HepG2 (cell line): ENCODE measurements at regions of chr14 and their contacts with region 1.

Region 1: DNA sequence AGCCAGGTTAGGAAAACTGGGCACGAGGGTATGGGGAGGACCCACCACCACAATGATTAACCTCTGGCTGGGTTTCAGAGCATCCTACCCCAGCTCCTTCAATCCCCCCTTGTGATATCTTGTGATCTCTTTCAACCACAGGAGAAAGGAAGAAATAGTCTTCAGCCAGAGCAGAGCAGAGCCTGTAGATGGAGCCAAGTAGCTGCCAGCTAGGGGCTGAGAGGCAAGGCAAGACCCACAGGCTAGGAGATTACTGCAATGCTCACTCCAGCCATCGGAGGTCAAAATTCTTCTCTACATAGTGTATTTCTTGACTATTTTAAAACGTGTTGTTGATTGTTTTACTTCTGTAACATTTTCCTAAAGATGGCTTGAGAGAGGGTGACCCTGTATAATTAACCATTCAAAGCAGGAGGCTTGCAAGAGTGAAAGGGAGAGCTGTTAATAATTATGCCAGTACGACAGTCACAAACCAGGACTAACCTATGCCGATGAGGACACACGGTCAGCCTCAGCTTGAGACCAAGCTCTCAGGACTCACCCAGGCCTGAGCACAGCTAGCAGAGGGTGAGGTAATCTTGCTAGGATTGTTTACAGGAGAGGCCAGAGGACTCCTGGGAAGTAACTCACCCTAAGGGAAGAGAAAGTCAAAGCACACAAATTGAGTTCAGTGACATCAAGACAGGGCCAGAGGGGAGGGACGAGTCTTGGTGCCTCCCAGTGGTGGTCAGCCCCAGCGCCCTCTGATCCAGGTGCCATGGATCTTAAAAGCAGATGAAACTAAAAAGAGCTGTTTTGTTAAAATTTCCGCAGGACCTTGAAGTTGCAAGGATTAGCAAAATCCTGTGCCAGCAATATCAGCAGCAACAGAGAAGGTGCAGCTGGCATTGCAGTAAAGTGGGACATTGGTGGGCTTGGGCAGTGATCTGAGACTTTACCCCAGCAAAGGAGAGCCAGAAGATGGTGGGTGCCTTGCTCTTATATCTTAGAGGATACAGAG is 29.8 kb upstream of the CDKN3 start:
- DNase-seq: peak; percentile 84
- ATAC-seq: peak; percentile 97
- H3K4me3 ChIP-seq: peak overlapping the region; percentile 41 to 62 (median 53); a peak in 5 of 6 replicates
- H3K27ac ChIP-seq: peak overlapping the region; percentile 73
- H3K4me1 ChIP-seq: peaks cover 50% of the 10 kb centered on the region
- H3K27me3 ChIP-seq: no peaks in the 10 kb centered on the region
- CTCF ChIP-seq: peak; percentile 79
- EP300 ChIP-seq: no peak
- POLR2A ChIP-seq: peak; percentile 78 to 94
- RAD21 ChIP-seq: peak; percentile 50

Region 2: DNA sequence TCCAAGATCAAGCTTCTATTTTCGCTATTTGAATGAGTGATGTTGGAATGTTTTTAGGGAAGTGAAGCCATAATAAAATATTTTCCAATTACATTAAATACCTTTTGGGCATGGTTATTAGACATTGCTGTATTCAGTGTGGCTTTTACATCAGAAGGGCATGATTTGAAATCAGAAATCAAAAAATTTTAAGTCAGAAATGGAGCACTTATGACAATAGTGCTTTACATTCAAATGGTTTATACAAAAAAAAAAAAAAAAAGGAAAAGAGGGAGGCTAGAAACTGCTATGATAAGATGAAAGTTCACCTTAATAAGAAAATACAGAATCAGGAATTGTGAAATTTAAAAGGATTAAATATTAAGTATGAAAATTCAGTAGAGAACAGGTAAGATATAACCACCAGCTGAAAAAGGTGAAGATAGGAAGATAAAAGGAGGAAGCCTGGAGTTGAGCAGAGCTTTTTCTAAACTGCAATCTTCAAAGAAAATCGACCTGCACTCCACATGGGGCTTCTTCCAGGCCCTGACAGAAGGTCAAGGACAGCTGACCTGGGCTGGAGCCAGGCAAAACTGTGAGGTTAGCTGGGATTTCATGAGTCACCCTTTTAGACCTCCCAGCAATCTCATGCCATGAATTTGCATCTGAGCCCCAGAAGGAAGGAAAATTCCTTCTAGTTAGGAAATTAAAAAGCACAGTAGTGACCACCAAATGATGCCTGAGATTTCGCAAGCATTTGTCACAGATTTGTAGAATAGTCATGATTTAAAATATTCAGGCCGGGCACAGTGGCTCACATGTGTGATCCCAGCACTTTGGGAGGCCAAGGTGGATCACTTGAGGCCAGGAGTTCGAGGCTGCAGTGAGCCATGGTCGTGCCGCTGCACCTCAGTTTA is 387.0 kb before region 1 on chr14:
- CTCF ChIA-PET with region 1: no interaction called
- POLR2A ChIA-PET with region 1: no interaction called
- in situ Hi-C with region 1: no loop called
- intact Hi-C with region 1: no loop called
- DNase-seq: peak; percentile 97
- ATAC-seq: peak; percentile 86
- H3K4me3 ChIP-seq: peak overlapping the region in 2 of 3 experiments; percentile 1 to 18; a peak in 2 of 6 replicates
- H3K27ac ChIP-seq: peak overlapping the region; percentile 99
- H3K4me1 ChIP-seq: peaks cover 75% of the 10 kb centered on the region
- H3K27me3 ChIP-seq: no peaks in the 10 kb centered on the region
- CTCF ChIP-seq: no peak
- EP300 ChIP-seq: peak; percentile 83 to 96; a peak in 3 of 4 replicates
- POLR2A ChIP-seq: no peak
- RAD21 ChIP-seq: no peak

Region 3: DNA sequence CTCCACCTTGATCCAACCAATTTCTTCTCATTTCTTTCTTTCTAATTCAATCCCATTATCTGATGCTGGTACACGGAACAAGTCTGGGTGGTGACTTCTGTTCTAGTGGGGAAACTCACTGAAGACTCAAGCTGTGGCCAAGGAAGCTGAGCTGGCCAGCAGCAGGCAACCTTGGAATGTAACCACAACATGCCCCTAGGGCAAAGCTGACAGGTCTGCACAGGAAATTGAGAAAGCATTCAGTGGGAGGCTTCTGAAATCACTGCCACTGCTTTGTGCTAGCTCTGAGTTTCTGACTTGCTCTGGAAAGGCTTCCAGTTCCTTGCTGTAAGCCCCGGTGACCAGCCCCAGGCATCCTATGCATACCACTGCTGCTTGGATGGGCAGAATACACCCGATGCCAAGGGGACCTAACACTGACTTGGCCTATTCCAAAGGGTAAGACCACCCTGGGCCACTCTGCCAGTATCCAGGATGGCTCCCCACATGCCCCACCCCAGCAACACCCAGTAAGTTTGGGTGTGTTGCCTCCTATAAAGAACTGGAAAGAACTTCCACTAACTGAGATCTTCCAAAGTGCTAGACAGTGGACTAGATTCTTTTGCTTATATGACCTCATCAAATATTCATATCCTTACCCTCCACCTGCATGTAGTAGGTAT is 54.8 kb before region 1 on chr14:
- CTCF ChIA-PET with region 1: no interaction called
- POLR2A ChIA-PET with region 1: no interaction called
- in situ Hi-C with region 1: no loop called
- intact Hi-C with region 1: no loop called
- DNase-seq: no peak
- ATAC-seq: no peak
- H3K4me3 ChIP-seq: no peak overlapping the region
- H3K27ac ChIP-seq: no peak overlapping the region
- H3K4me1 ChIP-seq: peaks cover 3% of the 10 kb centered on the region
- H3K27me3 ChIP-seq: peaks cover 0 to 2% of the 10 kb centered on the region in 2 experiments; a peak in 3 of 5 replicates
- CTCF ChIP-seq: no peak
- EP300 ChIP-seq: no peak
- POLR2A ChIP-seq: no peak
- RAD21 ChIP-seq: no peak

Region 4: DNA sequence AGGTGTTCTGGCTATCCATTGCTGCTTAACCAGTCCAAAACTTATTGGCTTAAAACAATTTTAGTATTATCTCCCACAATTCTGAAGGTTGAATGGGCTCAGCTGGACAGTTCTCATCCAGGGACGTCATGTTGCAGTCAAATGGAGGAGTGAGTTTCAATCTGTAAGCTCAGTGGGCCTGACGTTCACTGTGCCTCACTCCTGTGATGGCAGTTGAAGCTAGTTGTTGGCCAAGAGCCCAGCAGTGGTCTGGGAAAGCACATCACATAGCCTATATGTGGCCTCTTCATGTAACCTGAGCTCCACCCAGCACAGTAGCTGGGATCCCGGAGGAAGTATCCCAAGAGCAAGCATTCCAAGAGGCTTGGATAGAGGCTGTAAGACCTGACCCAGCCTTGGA is 10.9 kb before region 1 on chr14:
- CTCF ChIA-PET with region 1: no interaction called
- POLR2A ChIA-PET with region 1: interaction called, 102 read pairs
- in situ Hi-C with region 1: no loop called
- intact Hi-C with region 1: no loop called
- DNase-seq: peak; percentile 58
- ATAC-seq: no peak
- H3K4me3 ChIP-seq: no peak overlapping the region
- H3K27ac ChIP-seq: peak overlapping the region; percentile 46
- H3K4me1 ChIP-seq: peaks cover 80% of the 10 kb centered on the region
- H3K27me3 ChIP-seq: no peaks in the 10 kb centered on the region
- CTCF ChIP-seq: no peak
- EP300 ChIP-seq: no peak
- POLR2A ChIP-seq: no peak
- RAD21 ChIP-seq: no peak

Region 5: DNA sequence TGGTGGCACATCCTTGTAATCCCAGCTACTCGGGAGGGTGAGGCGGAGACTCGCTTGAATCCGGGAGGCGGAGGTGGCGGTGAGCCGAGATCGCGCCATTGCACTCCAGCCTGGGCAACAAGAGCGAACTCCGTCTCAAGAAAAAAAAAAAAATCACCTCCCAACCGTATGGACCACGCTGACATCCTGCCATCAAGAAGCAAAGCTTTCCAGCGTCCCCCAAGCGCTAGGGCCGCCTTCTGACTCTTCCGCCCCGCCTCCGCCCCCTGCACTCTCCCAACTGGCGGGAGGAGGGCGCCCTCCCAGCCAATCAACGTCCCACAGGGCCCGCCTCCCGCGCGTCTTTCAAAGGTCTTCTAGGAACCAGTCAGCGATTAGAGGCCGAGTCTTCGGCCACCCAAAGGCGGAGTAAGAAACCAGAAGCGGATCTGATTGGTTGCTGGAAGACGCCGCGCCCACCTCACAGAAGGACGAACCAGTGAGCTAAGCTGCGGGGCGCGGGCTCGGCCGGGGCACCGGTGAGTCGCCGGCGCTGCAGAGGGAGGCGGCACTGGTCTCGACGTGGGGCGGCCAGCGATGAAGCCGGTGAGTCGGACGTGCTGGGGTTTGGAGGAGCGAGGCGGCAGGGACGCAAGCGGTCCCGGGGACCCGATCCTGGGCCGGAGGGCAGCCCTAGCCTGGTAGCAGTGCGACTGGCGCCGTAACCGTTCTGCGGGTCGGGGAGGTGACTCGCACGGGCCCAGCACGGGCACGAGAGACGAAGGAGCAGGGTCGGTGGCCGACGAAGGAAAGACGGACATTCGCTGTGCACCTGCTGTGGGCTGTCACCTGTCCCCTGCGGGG is 29.7 kb after region 1 on chr14 and contains the start of gene CDKN3:
- CTCF ChIA-PET with region 1: no interaction called
- POLR2A ChIA-PET with region 1: interaction called, 26 read pairs
- in situ Hi-C with region 1: no loop called
- intact Hi-C with region 1: loop called (anchors 2 kb)
- DNase-seq: peak; percentile 98
- ATAC-seq: peak; percentile 97
- H3K4me3 ChIP-seq: peak within 1 kb of the TSS; percentile 72 to 98 (median 89)
- H3K27ac ChIP-seq: peak within 1 kb of the TSS; percentile 76
- H3K4me1 ChIP-seq: peaks cover 33% of the 10 kb centered on the region
- H3K27me3 ChIP-seq: no peaks in the 10 kb centered on the region; a peak in 1 of 5 replicates
- CTCF ChIP-seq: peak; percentile 74
- EP300 ChIP-seq: no peak
- POLR2A ChIP-seq: peak; percentile 91 to 95
- RAD21 ChIP-seq: peak; percentile 39; the same call in 1 of the 2 replicates
- total RNA-seq, gene CDKN3: 88.9 and 111 TPM in 2 replicates

Region 6: GRCh38 chr14:54420013-54420809 is 53.2 kb after region 1 on chr14:
- CTCF ChIA-PET with region 1: interaction called, 21 read pairs
- POLR2A ChIA-PET with region 1: interaction called, 14 read pairs
- in situ Hi-C with region 1: loop called (anchors 5 kb)
- intact Hi-C with region 1: loop called (anchors 1 kb)
- DNase-seq: peak; percentile 46
- ATAC-seq: peak; percentile 57
- H3K4me3 ChIP-seq: no peak overlapping the region
- H3K27ac ChIP-seq: peak overlapping the region; percentile 60
- H3K4me1 ChIP-seq: peaks cover 29% of the 10 kb centered on the region
- H3K27me3 ChIP-seq: no peaks in the 10 kb centered on the region
- CTCF ChIP-seq: peak; percentile 73
- EP300 ChIP-seq: no peak
- POLR2A ChIP-seq: no peak
- RAD21 ChIP-seq: peak; percentile 55; the same call in 1 of the 2 replicates

Region 7: GRCh38 chr14:54440873-54441868 is 74.1 kb after region 1 on chr14 and contains the start of gene CNIH1:
- CTCF ChIA-PET with region 1: no interaction called
- POLR2A ChIA-PET with region 1: interaction called, 5 read pairs
- in situ Hi-C with region 1: no loop called
- intact Hi-C with region 1: loop called (anchors 1 kb)
- DNase-seq: peak; percentile 84
- ATAC-seq: peak; percentile 97
- H3K4me3 ChIP-seq: peak within 1 kb of the TSS; percentile 82 to 87 (median 86)
- H3K27ac ChIP-seq: peak within 1 kb of the TSS; percentile 96
- H3K4me1 ChIP-seq: peaks cover 53% of the 10 kb centered on the region
- H3K27me3 ChIP-seq: no peaks in the 10 kb centered on the region; a peak in 1 of 5 replicates
- CTCF ChIP-seq: peak; percentile 83
- EP300 ChIP-seq: peak in 1 of 2 experiments; percentile 3; a peak in 1 of 4 replicates
- POLR2A ChIP-seq: peak; percentile 82 to 86
- RAD21 ChIP-seq: no peak; the same call in none of the 2 replicates
- total RNA-seq, gene CNIH1: 141 and 166 TPM in 2 replicates

Region 8: DNA sequence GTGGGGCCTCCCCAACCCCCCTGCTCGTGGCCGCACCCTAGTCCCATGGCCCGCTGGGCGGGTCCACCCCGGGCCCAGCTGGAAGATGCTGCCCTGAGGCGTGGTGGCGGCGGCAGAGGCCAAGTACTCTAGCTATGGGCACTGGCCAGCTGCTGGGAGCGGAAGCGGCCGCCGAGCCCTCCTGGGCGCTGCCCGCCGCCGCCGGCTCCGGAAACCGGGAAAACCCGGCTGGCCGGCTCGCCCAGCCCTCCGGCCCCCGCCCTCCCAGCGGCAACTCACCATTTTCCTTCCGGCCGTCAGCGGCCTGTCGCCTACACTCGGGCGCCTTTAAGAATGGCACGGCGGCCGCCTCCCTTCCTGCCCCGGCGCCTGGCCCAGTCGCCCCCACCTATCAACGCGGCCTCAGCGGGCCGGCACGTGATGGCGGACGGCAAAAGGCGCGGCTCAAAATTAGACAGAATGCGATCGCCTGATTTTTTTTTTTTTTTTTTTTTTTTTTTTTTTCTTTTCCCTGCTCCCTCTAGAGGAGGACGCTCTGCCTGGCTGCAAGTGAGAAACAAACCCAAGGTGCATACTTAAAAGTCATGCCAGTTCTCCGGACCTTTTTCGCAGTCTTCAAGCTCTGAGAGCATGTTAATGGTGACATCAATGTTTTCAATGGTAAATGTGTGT is 121.7 kb after region 1 on chr14 and contains the start of gene GMFB:
- CTCF ChIA-PET with region 1: no interaction called
- POLR2A ChIA-PET with region 1: interaction called, 7 read pairs
- in situ Hi-C with region 1: loop called (anchors 10 kb)
- intact Hi-C with region 1: loop called (anchors 5 kb)
- DNase-seq: peak; percentile 80
- ATAC-seq: peak; percentile 95
- H3K4me3 ChIP-seq: peak within 1 kb of the TSS; percentile 90 to 99 (median 94)
- H3K27ac ChIP-seq: peak within 1 kb of the TSS; percentile 94
- H3K4me1 ChIP-seq: peaks cover 65% of the 10 kb centered on the region
- H3K27me3 ChIP-seq: no peaks in the 10 kb centered on the region; a peak in 1 of 5 replicates
- CTCF ChIP-seq: peak; percentile 35
- EP300 ChIP-seq: 0 out of 4 replicates have a peak, but pooled peaks of 1 of the 2 experiments have one; percentile 40
- POLR2A ChIP-seq: peak; percentile 58; a peak in 3 of 4 replicates
- RAD21 ChIP-seq: 0 out of 2 replicates have a peak, but pooled peaks have one; percentile 65
- total RNA-seq, gene GMFB: 68.2 and 103 TPM in 2 replicates